ENCODE measurements at regions of chr7 and their contacts with region 1.

Region 1: GRCh38 chr7:149662591-149663095 is 110.7 kb downstream of the ZNF467 start:
- DNase-seq: peak; percentile 50 to 87
- ATAC-seq: peak; percentile 96

Region 2: GRCh38 chr7:149060156-149060555 is 602.5 kb before region 1 on chr7:
- intact Hi-C with region 1: no loop called
- DNase-seq: no peak
- ATAC-seq: no peak

Region 3: DNA sequence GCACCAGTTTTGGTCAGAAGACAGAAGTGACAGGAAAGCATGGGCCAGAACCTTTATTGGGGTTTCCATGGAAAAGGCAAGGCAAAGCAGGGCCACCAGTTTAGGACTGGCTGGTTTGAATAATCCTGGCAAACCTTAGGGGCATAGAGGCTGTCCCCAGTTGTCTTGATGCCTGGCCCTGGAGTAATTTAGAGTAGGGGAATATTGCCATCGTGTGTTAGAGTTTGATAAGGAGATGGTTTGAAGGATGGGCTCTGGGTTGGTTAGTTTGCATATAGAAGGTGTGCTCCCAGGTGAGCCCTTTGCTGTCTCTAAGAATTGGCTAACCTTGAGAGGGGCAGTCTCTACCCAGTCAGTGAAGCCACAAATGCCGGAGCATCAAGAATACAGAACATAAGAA is 281.4 kb before region 1 on chr7:
- intact Hi-C with region 1: no loop called
- DNase-seq: no peak
- ATAC-seq: no peak

Region 4: GRCh38 chr7:149624419-149625339 is 38.0 kb before region 1 on chr7:
- intact Hi-C with region 1: no loop called
- DNase-seq: peak; percentile 94 to 96
- ATAC-seq: peak; percentile 97

Region 5: DNA sequence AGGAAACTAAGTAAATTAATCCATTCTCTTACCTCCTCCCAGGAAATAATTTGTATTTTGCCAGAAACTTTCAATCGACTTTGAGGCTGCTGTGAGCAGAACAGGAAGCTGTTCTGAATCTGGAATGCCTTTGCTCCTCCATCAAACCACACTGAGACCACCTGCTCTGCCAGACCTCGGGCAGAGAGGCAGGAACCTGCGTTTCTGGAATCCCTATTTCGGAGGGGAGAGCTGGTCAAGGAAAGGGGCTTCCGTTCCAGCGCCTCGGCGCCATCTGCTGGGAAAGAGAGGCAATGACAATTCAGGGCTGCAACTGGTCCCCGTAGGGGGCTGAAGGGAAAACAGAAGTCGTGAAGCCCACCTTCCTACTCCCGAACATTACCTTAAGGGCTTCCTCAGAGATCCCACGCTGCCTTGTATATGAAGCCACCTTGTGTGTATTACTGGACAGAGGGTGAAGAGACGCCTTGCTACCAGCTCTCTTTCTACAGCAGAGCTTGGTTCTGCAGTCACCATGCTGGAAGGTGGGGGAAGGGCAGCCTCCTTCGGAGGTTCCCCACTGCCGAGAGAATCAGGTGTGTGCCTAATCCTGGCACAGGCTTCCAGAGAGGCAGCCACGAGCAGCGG is 79.5 kb after region 1 on chr7:
- intact Hi-C with region 1: loop called in 1 of 2 experiments (anchors 5 kb)
- DNase-seq: peak in 1 of 2 donors; percentile 66
- ATAC-seq: peak; percentile 80

Region 6: DNA sequence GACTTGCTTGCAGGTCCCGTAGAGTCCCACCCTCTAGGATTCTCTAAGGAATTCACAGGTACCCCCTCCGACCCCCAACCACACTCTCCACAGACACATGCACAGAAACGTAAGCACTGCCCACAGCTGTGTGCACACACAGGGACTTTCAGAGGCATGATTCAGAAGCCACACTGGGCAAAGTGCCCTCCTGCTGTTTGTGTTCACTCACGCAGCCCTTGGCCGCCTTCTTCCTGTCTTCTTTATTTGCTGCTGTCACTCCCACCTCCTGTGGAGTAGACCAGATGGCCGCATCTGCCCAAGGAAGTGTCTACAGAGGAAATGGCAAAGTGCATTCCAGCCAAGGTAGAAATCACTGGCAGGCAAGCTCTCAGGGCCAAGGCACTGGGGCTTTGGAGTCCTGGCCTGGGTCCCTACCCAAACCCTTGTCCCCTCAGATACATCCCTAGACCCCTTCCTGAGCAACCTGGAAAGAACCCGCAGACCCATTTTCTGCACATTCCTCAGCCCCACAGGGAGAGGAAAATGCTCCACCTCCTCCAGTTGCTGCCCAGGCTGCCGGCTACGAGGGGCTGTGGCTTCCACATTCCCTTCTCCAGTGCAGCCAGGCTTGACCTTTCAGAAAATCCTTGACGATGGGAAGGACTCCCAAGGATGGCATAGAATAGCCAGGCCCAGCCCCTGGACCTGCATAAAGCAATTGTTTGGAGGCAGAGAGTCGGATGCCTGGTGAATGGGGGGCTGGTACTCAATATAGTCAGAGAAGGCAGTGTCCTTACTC is 766.2 kb after region 1 on chr7:
- intact Hi-C with region 1: no loop called
- DNase-seq: peak; percentile 74 to 77
- ATAC-seq: peak; percentile 95

Measured in left colon (tissue), 2 donors.